Activated T-helper 1 cell treated with anti-CD3 and anti-CD28 coated beads, Interleukin-12 subunit alpha, Interleukin-12 subunit beta, Interleukin-2, Interleukin-4 antibody, amounts not matched to agents 30 ng/mL and 10 ng/mL and 1 ng/mL, durations not matched to agents 14 hours and 24 hours and 36 hours (primary cell): ENCODE measurements at regions of chr3 and their contacts with region 1.

Region 1: GRCh38 chr3:196432137-196432879 is at the start of gene UBXN7:
- DNase-seq: peak; percentile 91
- H3K4me3 Mint-ChIP-seq: peak within 1 kb of the TSS; percentile 86
- H3K27ac Mint-ChIP-seq: peak within 1 kb of the TSS; percentile 97
- H3K4me1 Mint-ChIP-seq: peaks cover 23% of the 10 kb centered on the region
- H3K27me3 Mint-ChIP-seq: peaks cover 10% of the 10 kb centered on the region
- total RNA-seq, gene UBXN7: 54.8 and 60.9 TPM in 2 replicates

Region 2: DNA sequence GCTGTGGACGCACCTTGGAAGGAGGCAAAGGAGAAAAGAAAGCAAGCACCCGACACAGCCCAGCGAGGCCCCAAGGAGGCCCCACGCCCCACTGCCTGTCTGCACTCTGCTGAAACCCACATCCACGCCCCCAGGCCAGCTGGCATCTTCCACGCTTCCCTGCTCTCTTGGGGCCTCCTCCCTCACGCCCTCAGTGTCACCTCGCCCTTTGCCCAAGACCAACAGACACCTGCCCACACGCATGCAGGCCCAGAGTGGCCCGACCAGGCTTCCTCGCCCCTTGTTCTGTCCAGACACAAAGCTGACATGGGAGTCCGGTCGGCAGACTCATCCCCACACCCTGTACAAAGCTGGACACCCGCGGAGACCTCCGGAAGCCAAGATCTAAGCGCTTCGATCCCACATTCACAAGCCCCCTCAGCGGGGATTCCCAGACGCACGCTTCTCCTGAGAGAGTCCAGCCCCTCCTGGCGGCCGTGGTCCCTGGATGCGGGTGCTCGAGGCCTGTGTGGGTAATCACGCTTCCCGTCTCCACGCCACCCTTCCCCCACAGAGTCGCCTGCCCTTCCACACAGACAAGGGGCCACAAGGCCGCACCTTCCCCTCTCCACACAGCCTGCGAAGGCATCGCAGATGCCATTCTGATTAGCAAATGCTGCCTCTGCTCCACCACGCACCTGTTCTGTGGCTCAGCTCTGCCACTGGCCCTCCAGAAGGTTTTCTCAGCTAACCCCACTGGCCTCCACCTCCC is 1338.0 kb before region 1 on chr3:
- intact Hi-C with region 1: no loop called
- DNase-seq: no peak
- H3K4me3 Mint-ChIP-seq: no peak overlapping the region
- H3K27ac Mint-ChIP-seq: no peak overlapping the region
- H3K4me1 Mint-ChIP-seq: no peaks in the 10 kb centered on the region
- H3K27me3 Mint-ChIP-seq: peaks cover 2% of the 10 kb centered on the region

Region 3: DNA sequence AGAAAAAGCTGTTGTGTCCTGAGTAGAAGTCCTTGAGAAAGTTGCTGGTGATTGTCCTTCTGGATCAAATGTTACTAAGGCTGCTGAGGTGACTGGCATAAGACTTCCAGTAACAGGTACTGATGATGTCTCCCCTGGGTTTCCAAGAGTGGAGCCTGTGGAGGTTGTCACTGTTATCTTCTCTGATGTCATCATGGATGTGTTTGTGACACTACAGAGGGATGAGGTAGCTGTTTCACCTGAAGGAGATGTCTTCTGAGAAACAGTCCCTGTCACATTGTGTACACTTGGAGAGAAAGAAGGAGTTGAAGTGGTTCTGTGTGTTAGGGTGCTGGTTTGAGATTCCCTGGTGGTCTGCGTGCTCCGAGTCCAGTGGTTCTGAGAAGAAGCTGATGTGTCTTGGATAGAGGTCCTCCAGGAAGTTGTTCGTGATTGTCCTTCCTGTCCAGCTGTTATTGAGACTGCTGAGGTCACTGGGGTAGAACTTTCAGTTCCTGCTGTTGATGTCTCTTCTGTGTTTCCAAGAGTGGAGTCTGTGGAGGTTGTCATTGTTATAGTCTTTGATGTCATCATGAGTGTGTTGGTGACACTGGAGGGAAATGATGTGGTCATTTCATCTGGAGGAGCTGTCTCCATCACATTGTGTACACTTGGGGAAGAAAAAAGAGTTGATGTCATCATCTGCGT is 641.6 kb before region 1 on chr3:
- intact Hi-C with region 1: no loop called
- DNase-seq: no peak
- H3K4me3 Mint-ChIP-seq: no peak overlapping the region
- H3K27ac Mint-ChIP-seq: no peak overlapping the region
- H3K4me1 Mint-ChIP-seq: peaks cover 24% of the 10 kb centered on the region
- H3K27me3 Mint-ChIP-seq: peaks cover 9% of the 10 kb centered on the region

Region 4: GRCh38 chr3:196287440-196288148 is 144.7 kb before region 1 on chr3 and contains the start of gene PCYT1A:
- intact Hi-C with region 1: loop called (anchors 1 kb)
- DNase-seq: peak; percentile 72
- H3K4me3 Mint-ChIP-seq: peak within 1 kb of the TSS; percentile 99
- H3K27ac Mint-ChIP-seq: peak within 1 kb of the TSS; percentile 95
- H3K4me1 Mint-ChIP-seq: peaks cover 44% of the 10 kb centered on the region
- H3K27me3 Mint-ChIP-seq: no peaks in the 10 kb centered on the region
- total RNA-seq, gene PCYT1A: 54.7 and 57.0 TPM in 2 replicates

Region 5: GRCh38 chr3:196317687-196318467 is 114.4 kb before region 1 on chr3 and contains the start of gene DYNLT2B:
- intact Hi-C with region 1: loop called (anchors 1 kb)
- DNase-seq: peak; percentile 87
- H3K4me3 Mint-ChIP-seq: peak within 1 kb of the TSS; percentile 95
- H3K27ac Mint-ChIP-seq: peak within 1 kb of the TSS; percentile 98
- H3K4me1 Mint-ChIP-seq: peaks cover 7% of the 10 kb centered on the region
- H3K27me3 Mint-ChIP-seq: no peaks in the 10 kb centered on the region
- total RNA-seq, gene DYNLT2B: 11.6 and 12.7 TPM in 2 replicates

Region 6: DNA sequence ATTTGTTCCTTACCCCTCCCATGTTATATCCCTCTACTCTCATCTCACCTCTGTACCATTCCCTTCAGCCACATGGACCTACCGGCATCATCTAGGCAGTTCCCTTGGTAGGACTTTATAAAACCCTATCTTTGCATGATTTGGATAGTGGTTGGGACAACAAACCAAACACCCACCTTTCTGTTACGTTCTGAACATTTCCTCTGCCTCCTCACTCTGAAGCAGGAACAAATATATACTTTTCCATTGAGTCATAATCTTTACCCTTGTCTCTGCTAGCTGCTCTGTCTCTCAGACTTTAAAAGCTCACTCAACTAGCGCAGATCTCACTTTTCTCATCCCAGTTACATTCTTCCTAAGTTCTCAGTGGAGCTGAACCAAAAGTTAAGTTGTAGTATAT is 17.8 kb before region 1 on chr3:
- intact Hi-C with region 1: loop called (anchors 1 kb)
- DNase-seq: no peak
- H3K4me3 Mint-ChIP-seq: peak overlapping the region; percentile 23
- H3K27ac Mint-ChIP-seq: peak overlapping the region; percentile 82
- H3K4me1 Mint-ChIP-seq: peaks cover 34% of the 10 kb centered on the region
- H3K27me3 Mint-ChIP-seq: no peaks in the 10 kb centered on the region

Region 7: GRCh38 chr3:196528639-196529233 is 96.4 kb after region 1 on chr3:
- intact Hi-C with region 1: loop called (anchors 1 kb)
- DNase-seq: peak; percentile 76
- H3K4me3 Mint-ChIP-seq: peak overlapping the region; percentile 76
- H3K27ac Mint-ChIP-seq: peak overlapping the region; percentile 75
- H3K4me1 Mint-ChIP-seq: peaks cover 8% of the 10 kb centered on the region
- H3K27me3 Mint-ChIP-seq: peaks cover 6% of the 10 kb centered on the region

Region 8: DNA sequence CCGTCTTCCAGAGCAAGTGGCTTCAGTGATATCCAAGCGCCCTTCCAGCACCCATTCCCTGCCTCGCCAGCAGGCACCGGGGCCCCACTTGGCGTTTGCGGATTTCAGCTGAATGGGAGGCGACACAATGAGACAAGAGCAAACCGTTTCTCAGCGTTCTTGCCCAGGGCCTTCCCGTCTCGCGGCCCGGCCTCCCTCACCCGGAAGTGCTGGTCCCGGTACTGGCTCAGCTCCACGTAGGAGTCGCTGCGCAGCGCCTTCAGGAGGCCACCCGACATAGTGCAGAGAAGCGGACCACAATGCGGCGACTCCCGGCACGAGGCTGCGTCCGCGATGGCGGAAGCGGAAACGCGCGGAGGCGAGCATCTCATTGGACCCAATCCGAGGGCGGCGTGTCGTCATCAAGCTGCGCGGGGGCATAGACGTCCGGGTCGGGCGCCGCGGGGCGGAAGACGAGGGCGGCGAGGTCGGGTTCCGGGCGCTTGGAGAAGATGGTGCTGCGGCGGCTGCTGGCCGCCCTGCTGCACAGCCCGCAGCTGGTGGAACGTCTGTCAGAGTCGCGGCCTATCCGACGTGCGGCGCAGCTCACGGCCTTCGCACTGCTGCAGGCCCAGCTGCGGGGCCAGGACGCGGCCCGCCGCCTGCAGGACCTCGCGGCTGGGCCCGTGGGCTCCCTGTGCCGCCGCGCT is 510.1 kb after region 1 on chr3 and contains the start of gene NCBP2:
- intact Hi-C with region 1: loop called (anchors 5 kb)
- DNase-seq: peak; percentile 100
- H3K4me3 Mint-ChIP-seq: peak within 1 kb of the TSS; percentile 100
- H3K27ac Mint-ChIP-seq: peak within 1 kb of the TSS; percentile 97
- H3K4me1 Mint-ChIP-seq: peaks cover 55% of the 10 kb centered on the region
- H3K27me3 Mint-ChIP-seq: peaks cover 2% of the 10 kb centered on the region
- total RNA-seq, gene NCBP2: 102 and 111 TPM in 2 replicates